Aorta (tissue), 5 donors: ENCODE measurements at regions of chr6 and their contacts with region 1.

Region 1: GRCh38 chr6:157314705-157315321 is 8.5 kb downstream of the TMEM242 start:
- DNase-seq: no peak
- ATAC-seq: peak; percentile 81
- H3K4me3 ChIP-seq: no peak overlapping the region
- H3K27ac ChIP-seq: no peak overlapping the region
- H3K4me1 ChIP-seq: no peaks in the 10 kb centered on the region
- H3K27me3 ChIP-seq: no peaks in the 10 kb centered on the region

Region 2: DNA sequence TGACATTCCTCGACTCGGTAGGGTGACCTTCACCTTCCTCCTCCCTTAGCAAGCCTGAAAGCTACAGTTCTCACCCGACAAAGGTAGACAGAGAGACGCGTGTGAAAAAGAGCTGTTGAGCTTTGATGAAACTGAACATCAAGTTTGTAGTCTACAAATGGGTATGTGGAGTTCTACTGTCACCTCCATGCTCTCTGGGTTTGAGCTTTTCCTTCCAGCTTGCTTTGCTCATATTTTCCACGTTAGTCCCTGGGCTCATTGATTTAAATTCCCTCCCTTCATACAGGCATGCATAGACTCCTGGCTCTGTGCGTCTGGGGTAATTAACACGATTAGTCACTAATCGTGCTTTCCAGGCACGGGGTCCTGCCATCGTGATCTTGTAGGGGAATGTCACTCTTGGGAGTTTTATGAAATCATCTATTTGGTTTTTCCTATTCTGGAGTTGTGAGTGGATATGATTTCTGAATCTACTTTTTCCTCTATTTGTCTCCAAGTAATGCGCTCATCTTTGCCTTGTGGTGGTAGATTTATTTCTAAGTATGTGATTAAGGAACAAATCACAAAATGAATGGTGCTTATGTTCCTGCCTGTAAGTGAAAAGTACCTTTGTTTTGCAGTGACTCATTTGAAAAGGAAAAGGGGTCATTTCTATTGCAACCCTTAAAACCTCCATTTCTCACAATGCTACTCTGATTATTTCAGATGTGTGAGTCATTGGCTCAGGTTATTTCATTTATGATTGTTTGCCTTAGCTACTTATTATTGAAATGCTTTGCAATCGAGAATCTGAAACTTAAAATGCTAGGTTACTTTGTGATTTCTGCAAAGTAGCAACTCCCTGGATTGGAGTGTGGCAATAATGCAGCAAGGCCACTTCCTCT is 220.8 kb after region 1 on chr6:
- intact Hi-C with region 1: loop called in 1 of 2 experiments (anchors 10 kb)
- DNase-seq: no peak
- ATAC-seq: peak; percentile 70
- H3K4me3 ChIP-seq: no peak overlapping the region
- H3K27ac ChIP-seq: no peak overlapping the region
- H3K4me1 ChIP-seq: no peaks in the 10 kb centered on the region
- H3K27me3 ChIP-seq: no peaks in the 10 kb centered on the region

Region 3: GRCh38 chr6:157597446-157598312 is 282.9 kb after region 1 on chr6:
- intact Hi-C with region 1: loop called (anchors 2 kb)
- DNase-seq: peak; percentile 68 to 82
- ATAC-seq: peak; percentile 55
- H3K4me3 ChIP-seq: no peak overlapping the region
- H3K27ac ChIP-seq: no peak overlapping the region
- H3K4me1 ChIP-seq: no peaks in the 10 kb centered on the region
- H3K27me3 ChIP-seq: no peaks in the 10 kb centered on the region

Region 4: GRCh38 chr6:157667211-157668008 is 352.6 kb after region 1 on chr6:
- intact Hi-C with region 1: loop called (anchors 2 to 5 kb)
- DNase-seq: peak in 1 of 2 donors; percentile 16
- ATAC-seq: no peak
- H3K4me3 ChIP-seq: no peak overlapping the region
- H3K27ac ChIP-seq: no peak overlapping the region
- H3K4me1 ChIP-seq: no peaks in the 10 kb centered on the region
- H3K27me3 ChIP-seq: no peaks in the 10 kb centered on the region

Region 5: GRCh38 chr6:157912326-157912725 is 597.5 kb after region 1 on chr6:
- intact Hi-C with region 1: no loop called
- DNase-seq: no peak
- ATAC-seq: no peak
- H3K4me3 ChIP-seq: no peak overlapping the region
- H3K27ac ChIP-seq: no peak overlapping the region
- H3K4me1 ChIP-seq: no peaks in the 10 kb centered on the region
- H3K27me3 ChIP-seq: no peaks in the 10 kb centered on the region

Region 6: DNA sequence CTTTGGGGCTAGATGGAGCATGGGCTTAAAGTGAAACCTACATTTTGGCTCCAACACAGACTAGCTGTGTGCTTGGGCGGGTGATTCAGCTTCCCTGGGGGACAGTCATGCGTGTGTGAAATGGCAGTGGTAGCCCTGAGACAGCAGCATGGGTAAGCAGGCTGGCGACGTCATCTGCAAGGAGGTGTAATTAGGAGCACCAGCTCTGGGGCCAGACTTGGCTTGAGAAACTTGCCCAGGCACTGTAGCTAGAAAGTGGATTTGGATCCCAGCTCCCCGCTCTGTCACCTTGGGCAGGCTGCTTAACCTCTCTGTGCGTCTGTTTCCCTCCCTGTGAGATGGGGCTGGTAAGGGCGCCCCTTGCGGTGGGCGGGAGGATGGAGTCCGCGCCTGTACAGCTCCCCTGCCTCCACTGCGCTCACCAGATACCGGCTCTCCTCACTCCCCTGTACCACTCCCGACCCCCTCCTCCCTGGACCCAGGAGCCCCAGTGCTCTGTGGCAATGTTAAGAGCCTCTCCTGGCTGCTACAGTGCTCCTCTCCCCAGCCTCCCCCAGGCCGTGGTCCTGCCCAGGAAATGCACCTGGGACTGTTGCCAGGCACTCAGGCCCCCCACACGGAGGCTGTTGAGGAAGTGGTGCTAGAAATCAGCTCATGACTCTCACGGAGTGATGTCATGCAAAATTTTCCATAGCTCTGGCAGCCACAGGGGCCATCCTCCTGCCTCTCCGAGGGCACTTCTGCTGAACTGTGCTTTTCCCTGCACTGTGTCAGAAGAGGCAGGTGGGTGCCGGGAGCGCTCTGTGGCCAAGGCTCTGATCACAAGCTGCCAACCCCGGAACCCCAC is 711.5 kb after region 1 on chr6:
- intact Hi-C with region 1: no loop called
- DNase-seq: peak; percentile 94 to 95
- ATAC-seq: peak; percentile 83
- H3K4me3 ChIP-seq: no peak overlapping the region
- H3K27ac ChIP-seq: peak overlapping the region in 1 of 2 donors; percentile 61
- H3K4me1 ChIP-seq: peaks cover 0 to 3% of the 10 kb centered on the region in 2 donors
- H3K27me3 ChIP-seq: no peaks in the 10 kb centered on the region